Heart right ventricle (tissue), 16 donors: ENCODE measurements at regions of chr12 and their contacts with region 1.

Region 1: GRCh38 chr12:9064201-9064814 is 51.4 kb downstream of the A2M start:
- DNase-seq: peak; percentile 61
- ATAC-seq: peak; percentile 77 to 88 (median 87)
- H3K4me3 ChIP-seq: peak overlapping the region; percentile 70 to 98 (median 92)
- H3K27ac ChIP-seq: peak overlapping the region; percentile 94 to 99 (median 98)
- H3K4me1 ChIP-seq: peaks cover 4 to 24% (median 14%) of the 10 kb centered on the region in 9 donors
- H3K27me3 ChIP-seq: no peaks in the 10 kb centered on the region
- CTCF ChIP-seq: peak in 8 of 9 donors; percentile 40 to 68 (median 54)

Region 2: GRCh38 chr12:9103050-9103849 is 38.9 kb after region 1 on chr12:
- intact Hi-C with region 1: loop called in 2 of 10 experiments (anchors 2 to 5 kb)
- DNase-seq: no peak
- ATAC-seq: no peak
- H3K4me3 ChIP-seq: no peak overlapping the region
- H3K27ac ChIP-seq: no peak overlapping the region
- H3K4me1 ChIP-seq: peaks cover 0 to 43% (median 9%) of the 10 kb centered on the region in 9 donors
- H3K27me3 ChIP-seq: no peaks in the 10 kb centered on the region
- CTCF ChIP-seq: no peak

Region 3: GRCh38 chr12:9169979-9170634 is 105.8 kb after region 1 on chr12:
- intact Hi-C with region 1: no loop called
- DNase-seq: peak; percentile 20 to 68
- ATAC-seq: peak; percentile 64 to 96 (median 87)
- H3K4me3 ChIP-seq: peak overlapping the region in 3 of 10 donors; percentile 10 to 27 (median 11)
- H3K27ac ChIP-seq: peak overlapping the region; percentile 26 to 89 (median 66)
- H3K4me1 ChIP-seq: peaks cover 0 to 51% (median 4%) of the 10 kb centered on the region in 9 donors
- H3K27me3 ChIP-seq: no peaks in the 10 kb centered on the region
- CTCF ChIP-seq: no peak

Region 4: DNA sequence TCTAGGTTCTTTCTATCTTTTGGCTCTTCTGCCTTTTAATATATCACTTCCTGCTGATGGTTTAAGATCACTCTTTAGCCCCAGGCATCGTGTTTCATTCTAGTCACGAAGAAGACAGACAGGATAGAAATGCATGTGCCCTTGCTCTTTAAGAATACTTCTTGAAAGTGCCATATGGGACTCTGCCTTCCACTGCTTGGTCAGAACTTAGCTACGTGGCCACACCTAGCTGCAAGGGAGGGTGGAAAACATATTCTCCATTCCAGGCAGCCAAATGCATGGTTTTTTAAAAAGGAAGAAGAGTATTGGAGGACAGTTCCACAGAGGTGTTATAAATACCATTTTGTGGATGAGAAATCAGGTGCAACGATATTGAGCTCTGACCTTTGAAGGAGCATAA is 400.1 kb after region 1 on chr12:
- intact Hi-C with region 1: loop called in 1 of 10 experiments (anchors 10 kb)
- DNase-seq: no peak
- ATAC-seq: no peak
- H3K4me3 ChIP-seq: no peak overlapping the region
- H3K27ac ChIP-seq: no peak overlapping the region
- H3K4me1 ChIP-seq: no peaks in the 10 kb centered on the region
- H3K27me3 ChIP-seq: no peaks in the 10 kb centered on the region
- CTCF ChIP-seq: no peak